Sigmoid colon (tissue), 7 donors: ENCODE measurements at regions of chr1 and their contacts with region 1.

Region 1: DNA sequence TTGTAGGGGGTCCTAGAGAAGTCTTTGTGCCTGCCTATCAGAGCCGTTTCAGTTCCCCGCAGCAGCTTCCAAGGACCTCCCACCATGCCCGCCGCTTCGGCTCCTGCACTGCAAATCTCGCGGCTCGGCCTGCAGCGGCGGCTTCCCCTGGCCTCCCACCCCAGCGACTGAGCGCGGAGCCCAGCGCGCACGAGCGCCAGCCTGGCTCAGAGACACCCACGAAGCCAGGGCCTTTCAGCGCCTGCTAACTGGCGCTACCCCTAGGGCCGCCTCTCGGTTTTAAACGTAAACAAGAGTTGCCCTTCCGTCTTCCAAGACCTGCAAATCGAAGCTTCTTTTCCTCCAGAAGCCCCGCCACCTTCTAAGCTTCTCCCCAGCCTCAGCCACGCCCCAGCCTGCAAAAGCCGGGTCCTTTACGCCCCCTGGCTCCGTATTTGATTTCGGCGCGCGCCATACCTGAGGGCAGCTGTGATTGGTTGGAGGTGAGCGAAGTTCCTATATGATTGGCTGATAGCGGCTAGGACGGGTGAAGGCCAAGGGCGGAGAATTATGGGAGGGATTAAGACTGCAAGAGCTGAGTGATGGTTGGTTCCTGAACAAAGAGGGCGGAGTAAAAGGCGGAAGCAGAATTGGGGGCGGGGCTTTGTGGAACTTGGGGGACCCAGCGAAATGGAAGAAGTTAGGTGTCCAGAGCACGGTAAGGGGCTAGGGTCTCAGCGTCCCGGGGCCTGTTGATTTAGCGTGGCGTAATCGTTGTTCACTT is at the start of gene TTF2:
- DNase-seq: peak; percentile 97
- H3K4me3 ChIP-seq: peak within 1 kb of the TSS; percentile 57 to 89 (median 62)
- H3K27ac ChIP-seq: peak within 1 kb of the TSS; percentile 70 to 87 (median 79)
- H3K4me1 ChIP-seq: peaks cover 0 to 10% (median 7%) of the 10 kb centered on the region in 4 donors
- H3K27me3 ChIP-seq: no peaks in the 10 kb centered on the region
- CTCF ChIP-seq: peak in 2 of 4 experiments; percentile 21 to 35
- EP300 ChIP-seq: no peak
- POLR2A ChIP-seq: no peak
- total RNA-seq, gene TTF2: 7.8 to 19.3 (median 8.7) TPM

Region 2: GRCh38 chr1:116570358-116571200 is 489.3 kb before region 1 on chr1 and contains the start of gene CD58:
- intact Hi-C with region 1: loop called (anchors 5 kb)
- DNase-seq: peak; percentile 93
- H3K4me3 ChIP-seq: peak within 1 kb of the TSS; percentile 73 to 95 (median 79)
- H3K27ac ChIP-seq: peak within 1 kb of the TSS; percentile 95 to 99 (median 96)
- H3K4me1 ChIP-seq: peaks cover 0 to 32% (median 21%) of the 10 kb centered on the region in 4 donors
- H3K27me3 ChIP-seq: no peaks in the 10 kb centered on the region
- CTCF ChIP-seq: peak in 3 of 4 experiments; percentile 50 to 71 (median 53)
- EP300 ChIP-seq: no peak
- POLR2A ChIP-seq: peak; percentile 26 to 58
- total RNA-seq, gene CD58: 17.5 to 36.6 (median 28.0) TPM

Region 3: DNA sequence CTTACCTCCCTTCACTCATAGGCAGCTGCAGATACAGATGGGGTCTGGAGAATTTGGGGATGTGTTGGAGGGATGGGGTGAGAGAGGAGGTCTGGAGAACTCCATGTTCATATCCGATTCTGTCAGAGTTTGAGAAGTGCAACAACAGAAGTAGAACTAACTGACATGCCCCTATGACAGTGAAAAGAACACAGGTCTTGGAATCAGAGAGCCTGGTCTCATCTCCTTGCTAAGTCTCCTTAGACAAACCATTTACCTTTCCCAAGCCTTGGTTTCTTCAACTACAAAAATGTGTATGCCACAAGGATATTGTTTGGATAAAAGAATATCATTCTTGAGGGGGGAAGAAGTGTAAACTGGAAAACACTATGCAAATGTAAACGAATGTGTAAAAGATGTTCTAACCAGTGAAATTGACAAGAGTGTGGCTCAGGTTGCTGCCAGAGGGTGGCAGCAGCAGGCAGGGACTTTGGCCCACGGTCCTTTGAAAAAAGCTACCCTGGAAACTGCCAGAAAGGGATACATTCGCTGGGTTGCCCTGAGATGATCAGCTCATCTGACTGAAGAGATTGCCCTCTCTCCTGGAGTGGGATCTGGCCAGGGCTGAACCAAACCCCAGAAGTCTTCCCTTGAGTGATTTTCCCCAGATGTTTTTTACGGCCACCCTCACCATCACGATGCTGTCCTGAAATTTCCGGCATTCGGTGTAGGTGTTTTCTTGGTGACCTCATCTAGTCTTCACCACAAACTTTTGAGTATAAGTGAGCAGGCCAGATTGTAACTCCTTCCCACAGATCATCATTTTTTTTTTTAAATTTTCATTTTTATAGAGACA is 322.6 kb before region 1 on chr1:
- intact Hi-C with region 1: loop called (anchors 1 kb)
- DNase-seq: no peak
- H3K4me3 ChIP-seq: no peak overlapping the region
- H3K27ac ChIP-seq: no peak overlapping the region
- H3K4me1 ChIP-seq: no peaks in the 10 kb centered on the region
- H3K27me3 ChIP-seq: no peaks in the 10 kb centered on the region
- CTCF ChIP-seq: peak; percentile 10 to 72 (median 66)
- EP300 ChIP-seq: no peak
- POLR2A ChIP-seq: no peak

Region 4: DNA sequence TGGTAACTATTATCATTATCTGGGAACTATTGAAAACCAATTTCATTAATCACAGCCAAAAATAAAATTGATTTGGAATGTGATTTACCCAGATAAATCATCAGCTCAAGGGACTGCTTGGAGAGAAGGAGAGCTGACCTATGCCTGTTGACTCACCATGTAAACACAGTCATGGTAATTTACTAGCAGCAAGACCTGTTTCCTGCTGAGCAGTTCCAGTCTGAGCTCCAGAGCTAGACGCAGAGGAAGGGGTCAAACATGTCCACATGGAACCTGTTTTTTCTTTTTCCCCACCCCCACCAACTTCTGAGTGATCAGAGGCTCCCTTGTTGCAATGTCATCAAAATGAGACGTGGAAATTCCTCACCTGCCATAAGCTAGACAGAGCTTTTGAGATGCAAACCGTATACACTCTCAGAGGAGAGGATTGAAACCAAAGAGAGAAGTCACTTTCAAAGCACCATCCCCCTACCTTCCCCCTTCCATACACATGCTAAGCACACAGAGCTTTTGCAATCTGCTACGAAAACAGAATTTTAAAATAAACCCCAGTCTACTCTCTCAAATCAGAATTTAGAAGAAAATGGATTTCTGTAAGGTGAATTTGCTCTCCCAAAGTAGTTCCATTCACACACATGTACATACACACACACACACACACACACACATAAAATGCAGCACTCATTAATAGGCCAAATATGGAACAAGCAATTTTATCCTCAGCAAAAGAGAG is 206.0 kb before region 1 on chr1:
- intact Hi-C with region 1: loop called (anchors 2 kb)
- DNase-seq: no peak
- H3K4me3 ChIP-seq: no peak overlapping the region
- H3K27ac ChIP-seq: peak overlapping the region in 3 of 4 donors; percentile 34 to 46 (median 42)
- H3K4me1 ChIP-seq: peaks cover 2 to 36% (median 34%) of the 10 kb centered on the region in 4 donors
- H3K27me3 ChIP-seq: no peaks in the 10 kb centered on the region
- CTCF ChIP-seq: no peak
- EP300 ChIP-seq: no peak
- POLR2A ChIP-seq: no peak

Region 5: GRCh38 chr1:117121776-117122697 is 62.2 kb after region 1 on chr1:
- intact Hi-C with region 1: loop called (anchors 2 kb)
- DNase-seq: peak; percentile 98
- H3K4me3 ChIP-seq: peak overlapping the region; percentile 62 to 82 (median 72)
- H3K27ac ChIP-seq: peak overlapping the region; percentile 86 to 89 (median 88)
- H3K4me1 ChIP-seq: peaks cover 0 to 19% (median 13%) of the 10 kb centered on the region in 4 donors
- H3K27me3 ChIP-seq: no peaks in the 10 kb centered on the region
- CTCF ChIP-seq: peak; percentile 58 to 68 (median 66)
- EP300 ChIP-seq: peak in 1 of 4 donors; percentile 12
- POLR2A ChIP-seq: peak in 1 of 2 donors; percentile 4

Region 6: DNA sequence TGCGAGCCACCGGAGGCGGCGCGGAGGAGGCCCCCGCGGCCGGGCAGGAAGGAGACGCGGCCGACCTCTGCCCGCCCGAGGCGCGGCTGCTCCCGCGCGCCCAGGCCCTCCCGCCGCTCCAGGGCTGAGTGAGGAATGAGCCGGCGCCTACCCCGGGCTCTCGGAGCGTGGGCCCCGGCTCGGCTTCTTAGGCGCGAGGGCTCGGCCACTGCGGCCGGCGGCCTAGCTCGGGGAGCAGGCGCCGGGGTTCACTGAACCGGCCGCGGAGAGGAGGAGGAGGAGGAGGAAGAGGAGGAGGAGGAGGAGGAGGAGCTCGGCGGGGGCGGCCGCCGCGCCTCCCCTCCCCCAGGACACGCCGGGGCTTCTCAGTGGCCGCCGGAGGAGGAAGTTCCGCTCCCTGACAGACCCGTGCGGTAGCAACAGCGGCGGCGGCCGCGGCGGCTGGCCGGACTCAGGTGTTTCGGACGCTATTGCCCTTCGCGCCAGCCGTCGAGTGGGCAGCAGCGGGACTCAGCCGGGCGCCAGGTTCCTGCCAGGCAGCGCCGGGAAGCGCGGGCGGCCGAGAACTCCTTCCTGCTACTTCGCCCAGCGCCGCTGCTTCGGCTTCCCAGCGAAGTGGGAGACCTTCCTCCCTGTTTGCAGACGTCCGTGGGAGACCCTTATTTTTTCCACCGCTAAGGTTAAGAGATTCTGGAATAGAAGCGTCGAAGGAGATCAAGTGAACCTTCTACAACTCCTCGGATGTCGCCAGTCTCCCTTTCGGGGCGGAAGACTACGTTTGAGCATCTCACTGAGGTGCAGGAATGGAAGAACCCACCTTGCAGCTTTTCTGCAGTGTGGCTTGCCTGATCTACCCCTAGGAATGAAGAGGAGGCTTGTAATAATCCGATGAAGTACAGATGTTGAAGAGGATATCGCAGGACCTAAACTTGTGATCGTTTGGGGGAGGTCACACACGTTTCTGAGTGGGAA is 307.5 kb after region 1 on chr1 and contains the start of gene MAN1A2:
- intact Hi-C with region 1: loop called (anchors 5 kb)
- DNase-seq: peak; percentile 95
- H3K4me3 ChIP-seq: peak within 1 kb of the TSS; percentile 79 to 88 (median 83)
- H3K27ac ChIP-seq: peak within 1 kb of the TSS; percentile 97 to 99 (median 98)
- H3K4me1 ChIP-seq: peaks cover 0 to 66% (median 54%) of the 10 kb centered on the region in 4 donors
- H3K27me3 ChIP-seq: no peaks in the 10 kb centered on the region
- CTCF ChIP-seq: no peak
- EP300 ChIP-seq: no peak
- POLR2A ChIP-seq: peak; percentile 65 to 82
- total RNA-seq, gene MAN1A2: 36.8 to 52.8 (median 43.4) TPM